HepG2 (cell line): ENCODE measurements at regions of chr15 and their contacts with region 1.

Region 1: GRCh38 chr15:90400406-90401314 is 12.6 kb downstream of the IQGAP1 start:
- DNase-seq: peak; percentile 93
- ATAC-seq: peak; percentile 99
- H3K4me3 ChIP-seq: peak overlapping the region in 2 of 3 experiments; percentile 16 to 34; a peak in 2 of 6 replicates
- H3K27ac ChIP-seq: peak overlapping the region; percentile 88
- H3K4me1 ChIP-seq: peaks cover 36% of the 10 kb centered on the region
- H3K27me3 ChIP-seq: no peaks in the 10 kb centered on the region
- CTCF ChIP-seq: no peak
- EP300 ChIP-seq: peak; percentile 24 to 70; a peak in 2 of 4 replicates
- POLR2A ChIP-seq: no peak
- RAD21 ChIP-seq: no peak

Region 2: DNA sequence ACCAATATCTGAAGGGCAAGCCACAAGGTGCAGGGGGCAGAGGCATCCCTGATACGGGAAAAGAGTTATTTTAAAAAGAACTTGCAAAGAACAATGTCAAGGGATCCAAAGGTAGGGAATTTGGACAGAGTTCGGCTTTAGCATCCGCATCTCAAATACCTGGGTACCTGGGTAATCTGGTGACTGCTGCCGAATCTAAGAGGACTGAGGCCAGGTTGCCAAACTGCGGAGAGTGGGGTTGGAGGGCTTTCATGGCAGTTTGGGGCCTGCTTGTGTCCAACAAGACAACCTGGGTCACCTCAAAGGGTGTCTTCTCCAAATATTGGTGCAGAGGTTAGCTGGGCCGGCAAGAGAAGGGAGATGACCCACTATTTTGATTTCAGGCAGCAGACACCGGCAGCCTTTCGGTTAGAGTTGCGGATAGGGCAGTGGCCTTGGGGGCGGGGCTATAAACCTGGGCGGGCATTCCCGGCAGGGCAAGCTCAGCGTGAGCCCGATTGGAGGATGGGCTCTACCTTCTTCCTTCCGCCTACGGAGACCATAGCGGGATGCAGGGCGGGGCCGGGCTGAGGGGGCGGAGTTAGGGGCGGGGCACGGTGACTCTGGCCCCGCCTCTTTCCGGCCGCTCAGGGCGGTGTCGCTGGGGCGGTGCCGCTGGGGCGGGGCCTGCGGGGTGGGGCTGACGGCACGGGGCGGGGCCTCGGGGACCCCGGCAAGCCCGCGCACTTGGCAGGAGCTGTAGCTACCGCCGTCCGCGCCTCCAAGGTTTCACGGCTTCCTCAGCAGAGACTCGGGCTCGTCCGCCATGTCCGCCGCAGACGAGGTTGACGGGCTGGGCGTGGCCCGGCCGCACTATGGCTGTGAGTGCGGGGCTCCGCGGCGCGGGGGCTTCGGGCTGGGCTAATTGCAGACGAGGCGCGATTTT is 12.9 kb before region 1 on chr15 and contains the start of gene IQGAP1:
- CTCF ChIA-PET with region 1: no interaction called
- POLR2A ChIA-PET with region 1: interaction called, 17 read pairs
- in situ Hi-C with region 1: no loop called
- intact Hi-C with region 1: no loop called
- DNase-seq: peak; percentile 92
- ATAC-seq: peak; percentile 98
- H3K4me3 ChIP-seq: peak within 1 kb of the TSS; percentile 90 to 96 (median 92)
- H3K27ac ChIP-seq: peak within 1 kb of the TSS; percentile 65
- H3K4me1 ChIP-seq: peaks cover 17% of the 10 kb centered on the region
- H3K27me3 ChIP-seq: no peaks in the 10 kb centered on the region; a peak in 1 of 5 replicates
- CTCF ChIP-seq: no peak
- EP300 ChIP-seq: no peak
- POLR2A ChIP-seq: peak; percentile 71 to 78
- RAD21 ChIP-seq: no peak
- total RNA-seq, gene IQGAP1: 25.9 and 37.9 TPM in 2 replicates

Region 3: DNA sequence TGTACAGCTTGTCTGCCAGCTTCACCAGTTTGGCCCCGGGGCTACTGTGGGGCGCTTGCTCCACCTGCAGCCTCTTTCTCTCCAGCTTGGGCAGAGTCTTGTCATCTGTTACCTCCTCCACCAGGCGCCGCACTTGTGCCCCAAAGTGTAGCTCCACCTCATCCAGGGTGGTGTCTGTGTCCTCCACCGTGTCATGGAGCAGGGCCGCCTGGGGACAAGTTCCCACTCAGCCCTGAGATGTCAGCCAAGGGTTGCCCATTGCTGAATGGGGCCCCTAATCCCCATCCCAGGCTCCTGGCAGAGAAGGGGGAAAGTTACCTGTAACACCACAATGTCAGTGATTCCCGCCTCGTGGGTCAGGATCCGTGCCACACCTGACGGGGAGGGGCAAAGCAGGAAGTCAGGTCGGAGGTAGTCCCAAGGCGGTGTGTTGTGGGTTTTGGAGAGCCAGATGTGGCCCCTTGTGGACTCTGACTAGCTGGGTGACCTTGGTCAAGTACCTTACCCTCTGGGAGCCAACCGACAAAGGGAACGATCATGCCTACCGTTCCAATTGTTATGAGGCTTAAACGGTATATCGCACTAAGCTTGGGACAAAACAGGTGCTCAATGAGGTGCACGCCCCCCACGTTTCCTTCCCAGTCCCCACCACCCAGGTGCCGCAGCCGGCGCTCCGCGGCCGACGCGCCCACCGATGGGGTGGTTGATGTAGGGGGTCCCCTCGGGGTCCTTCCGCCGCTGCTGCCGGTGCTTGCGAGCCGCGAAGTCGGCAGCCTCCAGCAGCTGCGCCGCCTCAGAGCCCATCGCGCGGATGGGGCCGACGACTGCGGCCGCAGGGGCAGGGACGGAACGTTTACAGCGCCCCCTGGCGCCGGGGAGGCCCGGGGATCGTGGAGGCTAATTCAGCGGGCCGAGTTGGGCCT is 531.3 kb after region 1 on chr15 and contains the start of gene HDDC3:
- CTCF ChIA-PET with region 1: no interaction called
- POLR2A ChIA-PET with region 1: no interaction called
- in situ Hi-C with region 1: no loop called
- intact Hi-C with region 1: no loop called
- DNase-seq: peak; percentile 86
- ATAC-seq: peak; percentile 69
- H3K4me3 ChIP-seq: peak within 1 kb of the TSS; percentile 67 to 91 (median 87)
- H3K27ac ChIP-seq: peak within 1 kb of the TSS; percentile 96
- H3K4me1 ChIP-seq: peaks cover 61% of the 10 kb centered on the region
- H3K27me3 ChIP-seq: no peaks in the 10 kb centered on the region; a peak in 2 of 5 replicates
- CTCF ChIP-seq: peak; percentile 93
- EP300 ChIP-seq: no peak
- POLR2A ChIP-seq: peak in 1 of 2 experiments; percentile 74; a peak in 2 of 4 replicates
- RAD21 ChIP-seq: peak; percentile 52; the same call in 1 of the 2 replicates
- total RNA-seq, gene HDDC3: 28.3 and 30.0 TPM in 2 replicates